Esophagus squamous epithelium (tissue), 5 donors: ENCODE measurements at regions of chr11 and their contacts with region 1.

Region 1: GRCh38 chr11:65497141-65498041 is 1.5 kb upstream of the MALAT1 start:
- DNase-seq: peak; percentile 92
- H3K4me3 ChIP-seq: peak overlapping the region; percentile 47 to 96 (median 76)
- H3K27ac ChIP-seq: peak overlapping the region; percentile 95 to 100 (median 98)
- H3K4me1 ChIP-seq: peaks cover 41 to 48% (median 45%) of the 10 kb centered on the region in 3 donors
- H3K27me3 ChIP-seq: no peaks in the 10 kb centered on the region
- CTCF ChIP-seq: peak in 2 of 6 experiments; percentile 18 to 34
- POLR2A ChIP-seq: peak in 3 of 4 donors; percentile 63 to 91 (median 89)

Region 2: DNA sequence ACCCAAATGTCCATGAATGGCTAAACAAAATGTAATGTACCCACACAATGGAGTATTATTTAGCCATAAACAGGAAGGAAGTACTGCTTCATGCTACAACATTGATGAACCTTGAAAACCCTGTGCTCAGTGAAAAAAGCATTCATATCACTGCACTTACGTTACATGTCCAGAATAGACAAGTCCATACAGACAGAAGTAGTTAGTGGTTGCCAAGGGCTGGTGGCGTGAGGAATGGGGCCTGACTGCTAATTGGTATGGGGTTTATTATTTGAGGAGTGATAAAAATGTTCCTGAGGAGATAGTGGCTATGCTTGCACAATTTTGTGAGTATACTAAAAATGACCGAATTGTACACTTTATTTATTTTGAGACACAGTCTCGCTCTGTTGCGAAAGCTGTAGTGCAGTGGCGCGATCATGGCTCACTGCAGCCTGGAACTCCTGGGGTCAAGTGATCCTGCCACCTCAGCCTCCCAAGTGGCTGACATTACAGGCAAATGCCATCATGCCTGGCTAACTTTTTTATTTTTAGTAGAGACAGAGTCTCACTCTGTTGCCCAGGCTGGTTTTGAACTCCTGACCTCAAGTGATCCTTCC is 355.4 kb before region 1 on chr11:
- intact Hi-C with region 1: no loop called
- DNase-seq: no peak
- H3K4me3 ChIP-seq: no peak overlapping the region
- H3K27ac ChIP-seq: no peak overlapping the region
- H3K4me1 ChIP-seq: peaks cover 0 to 24% (median 0%) of the 10 kb centered on the region in 3 donors
- H3K27me3 ChIP-seq: no peaks in the 10 kb centered on the region
- CTCF ChIP-seq: no peak
- POLR2A ChIP-seq: no peak

Region 3: GRCh38 chr11:65386307-65387081 is 110.9 kb before region 1 on chr11 and contains the start of gene FRMD8:
- intact Hi-C with region 1: no loop called
- DNase-seq: peak; percentile 61
- H3K4me3 ChIP-seq: peak within 1 kb of the TSS; percentile 73 to 99 (median 88)
- H3K27ac ChIP-seq: peak within 1 kb of the TSS; percentile 95 to 99 (median 98)
- H3K4me1 ChIP-seq: peaks cover 76 to 97% (median 88%) of the 10 kb centered on the region in 3 donors
- H3K27me3 ChIP-seq: no peaks in the 10 kb centered on the region
- CTCF ChIP-seq: no peak
- POLR2A ChIP-seq: peak in 3 of 4 donors; percentile 95 to 96 (median 96)
- total RNA-seq, gene FRMD8: 44.1 to 88.7 (median 81.0) TPM

Region 4: GRCh38 chr11:65477149-65477965 is 20.0 kb before region 1 on chr11:
- intact Hi-C with region 1: loop called (anchors 2 kb)
- DNase-seq: peak; percentile 78
- H3K4me3 ChIP-seq: peak overlapping the region; percentile 66 to 89 (median 74)
- H3K27ac ChIP-seq: peak overlapping the region; percentile 98 to 100 (median 100)
- H3K4me1 ChIP-seq: peaks cover 37 to 81% (median 64%) of the 10 kb centered on the region in 3 donors
- H3K27me3 ChIP-seq: no peaks in the 10 kb centered on the region
- CTCF ChIP-seq: peak in 1 of 6 experiments; percentile 27
- POLR2A ChIP-seq: peak in 3 of 4 donors; percentile 91 to 99 (median 93)